K562 (cell line): ENCODE measurements at regions of chr5 and their contacts with region 1.

Region 1: GRCh38 chr5:157820593-157821252 is 38.2 kb downstream of the CLINT1 start:
- DNase-seq: peak; percentile 16 to 56 (median 18)
- ATAC-seq: peak; percentile 79
- H3K4me3 ChIP-seq: no peak overlapping the region
- H3K27ac ChIP-seq: peak overlapping the region; percentile 6; the same call in 1 of the 3 replicates
- H3K4me1 ChIP-seq: no peaks in the 10 kb centered on the region; a peak in 1 of 5 replicates
- H3K27me3 ChIP-seq: no peaks in the 10 kb centered on the region
- CTCF ChIP-seq: peak; percentile 27 to 61 (median 39); a peak in 3 of 6 replicates
- EP300 ChIP-seq: no peak
- POLR2A ChIP-seq: no peak
- RAD21 ChIP-seq: peak in 1 of 2 experiments; percentile 54; a peak in 2 of 4 replicates

Region 2: DNA sequence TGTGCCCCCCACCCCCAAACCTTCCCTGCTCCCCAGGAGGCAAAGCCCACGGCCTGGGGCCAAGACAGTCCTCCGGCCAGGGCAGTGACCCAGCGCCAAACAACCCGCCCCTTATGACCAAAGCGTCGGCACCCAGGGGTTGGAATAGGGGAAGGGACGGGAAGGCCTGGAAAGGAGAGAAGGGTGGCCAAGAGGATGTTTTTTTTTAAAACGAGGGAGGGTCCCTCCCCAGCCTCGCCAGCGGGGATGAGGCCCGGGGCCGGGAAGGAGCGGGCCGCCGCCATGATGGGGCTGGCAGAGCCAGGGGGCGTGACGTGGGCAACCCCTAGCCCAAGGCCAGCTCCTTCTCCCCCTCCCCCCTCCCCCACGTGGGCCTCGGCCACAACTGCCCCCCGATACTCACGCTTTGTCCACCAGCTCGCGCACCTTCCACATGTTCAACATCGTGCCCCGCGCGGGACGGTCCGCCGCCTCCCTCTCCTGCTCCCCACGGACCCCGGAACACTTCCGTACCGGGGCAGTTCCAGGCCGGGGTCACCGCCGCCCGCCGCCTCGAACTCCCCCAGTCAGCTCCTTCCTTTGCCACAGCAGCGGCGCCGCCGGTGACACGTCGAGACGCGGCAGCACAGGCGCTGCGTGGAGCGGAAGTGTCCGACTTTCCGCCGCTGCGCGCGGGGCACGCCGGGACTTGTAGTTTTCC is 38.0 kb after region 1 on chr5 and contains the start of gene CLINT1:
- CTCF ChIA-PET with region 1: no interaction called
- POLR2A ChIA-PET with region 1: interaction called, 3 read pairs
- in situ Hi-C with region 1: no loop called
- intact Hi-C with region 1: loop called (anchors 5 kb)
- DNase-seq: peak; percentile 84 to 94 (median 89)
- ATAC-seq: peak; percentile 95
- H3K4me3 ChIP-seq: peak within 1 kb of the TSS; percentile 96
- H3K27ac ChIP-seq: peak within 1 kb of the TSS; percentile 87
- H3K4me1 ChIP-seq: peaks cover 7 to 21% of the 10 kb centered on the region in 2 experiments
- H3K27me3 ChIP-seq: no peaks in the 10 kb centered on the region
- CTCF ChIP-seq: no peak
- EP300 ChIP-seq: no peak
- POLR2A ChIP-seq: peak; percentile 87
- RAD21 ChIP-seq: no peak
- polyA plus RNA-seq, gene CLINT1: 23.6 to 24.5 TPM

Region 3: DNA sequence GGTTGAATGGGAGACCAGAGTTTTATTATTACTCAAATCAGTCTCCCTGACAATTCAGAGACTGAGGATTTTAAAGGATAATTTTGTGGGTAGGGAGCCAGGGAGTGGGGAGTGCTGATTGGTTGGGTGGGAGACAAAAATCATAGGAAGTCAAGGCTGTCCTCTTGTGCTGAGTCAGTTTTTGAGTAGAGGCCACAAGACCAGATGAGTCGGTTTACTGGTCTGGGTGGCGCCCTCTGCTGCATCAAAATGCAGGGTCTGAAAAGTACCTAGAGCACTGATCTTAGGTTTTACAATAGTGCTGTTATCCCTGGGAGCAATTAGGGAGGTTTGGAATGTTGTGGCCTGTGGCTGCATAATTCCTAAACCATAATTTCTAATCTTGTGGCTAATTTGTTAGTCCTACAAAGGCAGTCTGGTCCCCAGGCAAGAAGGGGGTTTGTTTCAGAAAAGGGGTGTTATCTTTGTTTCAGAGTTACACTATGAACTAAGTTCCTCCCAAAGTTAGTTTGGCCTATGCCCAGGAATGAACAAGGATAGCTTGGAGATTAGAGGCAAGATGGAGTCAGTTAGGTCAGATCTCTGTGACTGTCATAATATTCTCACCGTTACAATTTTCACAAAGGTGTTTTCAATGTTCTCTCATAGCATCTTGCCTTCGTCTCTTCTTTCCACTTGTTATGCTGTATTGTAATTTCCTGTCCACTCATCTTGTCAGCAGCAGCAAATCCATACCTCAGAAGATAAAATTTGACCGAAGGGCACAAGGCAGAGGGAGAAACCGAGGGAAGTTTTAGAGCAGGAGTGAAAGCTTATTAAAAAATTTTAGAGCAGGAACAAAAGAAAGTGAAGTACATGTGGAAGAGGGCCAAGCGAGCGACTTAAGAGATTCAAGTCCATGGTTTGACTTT is 97.4 kb after region 1 on chr5:
- CTCF ChIA-PET with region 1: interaction called, 3 read pairs
- POLR2A ChIA-PET with region 1: no interaction called
- in situ Hi-C with region 1: no loop called
- intact Hi-C with region 1: loop called (anchors 1 kb)
- DNase-seq: peak; percentile 24 to 78 (median 32)
- ATAC-seq: peak; percentile 97
- H3K4me3 ChIP-seq: no peak overlapping the region
- H3K27ac ChIP-seq: no peak overlapping the region
- H3K4me1 ChIP-seq: peaks cover 0 to 13% of the 10 kb centered on the region in 2 experiments; a peak in 3 of 5 replicates
- H3K27me3 ChIP-seq: no peaks in the 10 kb centered on the region
- CTCF ChIP-seq: peak; percentile 63 to 71 (median 65)
- EP300 ChIP-seq: peak; percentile 17; the same call in 1 of the 2 replicates
- POLR2A ChIP-seq: no peak
- RAD21 ChIP-seq: peak; percentile 58 to 69

Region 4: GRCh38 chr5:157948738-157949410 is 128.2 kb after region 1 on chr5:
- CTCF ChIA-PET with region 1: interaction called, 17 read pairs
- POLR2A ChIA-PET with region 1: no interaction called
- in situ Hi-C with region 1: no loop called
- intact Hi-C with region 1: loop called (anchors 2 kb)
- DNase-seq: peak; percentile 32 to 91 (median 50)
- ATAC-seq: peak; percentile 99
- H3K4me3 ChIP-seq: no peak overlapping the region
- H3K27ac ChIP-seq: peak overlapping the region; percentile 20; the same call in 1 of the 3 replicates
- H3K4me1 ChIP-seq: no peaks in the 10 kb centered on the region; a peak in 3 of 5 replicates
- H3K27me3 ChIP-seq: peaks cover 4 to 5% of the 10 kb centered on the region in 2 experiments; a peak in 3 of 5 replicates
- CTCF ChIP-seq: peak; percentile 78 to 90 (median 88)
- EP300 ChIP-seq: peak; percentile 41; the same call in 1 of the 2 replicates
- POLR2A ChIP-seq: no peak
- RAD21 ChIP-seq: peak; percentile 61 to 77

Region 5: DNA sequence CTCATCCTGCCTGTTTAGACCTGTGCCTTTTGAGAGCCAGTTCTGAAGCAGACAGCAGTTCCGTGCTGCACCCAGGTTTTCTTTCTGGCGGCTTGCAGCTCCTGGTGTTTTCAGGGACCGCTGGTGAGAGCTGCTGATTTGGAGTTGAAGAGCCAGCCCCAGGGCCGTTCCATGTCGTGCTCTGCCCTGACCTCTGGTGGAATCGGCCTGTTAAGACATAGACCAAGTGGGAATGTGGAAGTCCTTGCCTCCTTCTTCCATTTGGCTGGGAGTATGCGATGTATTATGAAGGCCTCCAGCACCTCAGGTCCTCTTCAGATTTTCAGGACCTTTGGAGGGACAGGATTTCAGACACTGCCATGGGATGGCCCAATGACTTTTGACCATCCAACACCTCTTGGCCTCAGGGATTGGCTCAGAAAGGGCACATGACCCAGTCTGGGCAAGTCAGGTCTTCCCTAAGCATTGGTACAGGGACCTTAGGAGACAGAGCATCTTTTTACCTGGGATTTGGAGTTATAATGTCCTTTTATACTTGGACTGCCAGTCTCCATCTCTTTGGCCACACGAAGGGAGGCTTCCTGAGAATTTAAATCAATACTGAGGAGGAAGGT is 174.3 kb after region 1 on chr5:
- CTCF ChIA-PET with region 1: interaction called, 12 read pairs
- POLR2A ChIA-PET with region 1: no interaction called
- in situ Hi-C with region 1: no loop called
- intact Hi-C with region 1: loop called (anchors 2 kb)
- DNase-seq: peak; percentile 26 to 71 (median 47)
- ATAC-seq: peak; percentile 99
- H3K4me3 ChIP-seq: no peak overlapping the region
- H3K27ac ChIP-seq: no peak overlapping the region
- H3K4me1 ChIP-seq: no peaks in the 10 kb centered on the region
- H3K27me3 ChIP-seq: peaks cover 8 to 17% of the 10 kb centered on the region in 2 experiments; a peak in 4 of 5 replicates
- CTCF ChIP-seq: peak; percentile 76 to 81 (median 78)
- EP300 ChIP-seq: no peak
- POLR2A ChIP-seq: no peak
- RAD21 ChIP-seq: peak; percentile 80 to 84

Region 6: GRCh38 chr5:158303275-158303674 is 482.6 kb after region 1 on chr5:
- CTCF ChIA-PET with region 1: no interaction called
- POLR2A ChIA-PET with region 1: no interaction called
- in situ Hi-C with region 1: no loop called
- intact Hi-C with region 1: no loop called
- DNase-seq: no peak
- ATAC-seq: no peak
- H3K4me3 ChIP-seq: no peak overlapping the region
- H3K27ac ChIP-seq: no peak overlapping the region
- H3K4me1 ChIP-seq: no peaks in the 10 kb centered on the region
- H3K27me3 ChIP-seq: no peaks in the 10 kb centered on the region
- CTCF ChIP-seq: no peak
- EP300 ChIP-seq: no peak
- POLR2A ChIP-seq: no peak
- RAD21 ChIP-seq: no peak